ENCODE measurements at regions of chr13 and their contacts with region 1.

Region 1: GRCh38 chr13:30114571-30115256 is 192.6 kb downstream of the KATNAL1 start:
- DNase-seq: peak; percentile 98
- H3K4me3 Mint-ChIP-seq: peak overlapping the region; percentile 80
- H3K27ac Mint-ChIP-seq: peak overlapping the region; percentile 73
- H3K4me1 Mint-ChIP-seq: peaks cover 37% of the 10 kb centered on the region
- H3K27me3 Mint-ChIP-seq: peaks cover 9% of the 10 kb centered on the region

Region 2: GRCh38 chr13:29508130-29508875 is 606.4 kb before region 1 on chr13:
- intact Hi-C with region 1: loop called (anchors 2 kb)
- DNase-seq: peak; percentile 92
- H3K4me3 Mint-ChIP-seq: no peak overlapping the region
- H3K27ac Mint-ChIP-seq: no peak overlapping the region
- H3K4me1 Mint-ChIP-seq: peaks cover 1% of the 10 kb centered on the region
- H3K27me3 Mint-ChIP-seq: peaks cover 2% of the 10 kb centered on the region

Region 3: DNA sequence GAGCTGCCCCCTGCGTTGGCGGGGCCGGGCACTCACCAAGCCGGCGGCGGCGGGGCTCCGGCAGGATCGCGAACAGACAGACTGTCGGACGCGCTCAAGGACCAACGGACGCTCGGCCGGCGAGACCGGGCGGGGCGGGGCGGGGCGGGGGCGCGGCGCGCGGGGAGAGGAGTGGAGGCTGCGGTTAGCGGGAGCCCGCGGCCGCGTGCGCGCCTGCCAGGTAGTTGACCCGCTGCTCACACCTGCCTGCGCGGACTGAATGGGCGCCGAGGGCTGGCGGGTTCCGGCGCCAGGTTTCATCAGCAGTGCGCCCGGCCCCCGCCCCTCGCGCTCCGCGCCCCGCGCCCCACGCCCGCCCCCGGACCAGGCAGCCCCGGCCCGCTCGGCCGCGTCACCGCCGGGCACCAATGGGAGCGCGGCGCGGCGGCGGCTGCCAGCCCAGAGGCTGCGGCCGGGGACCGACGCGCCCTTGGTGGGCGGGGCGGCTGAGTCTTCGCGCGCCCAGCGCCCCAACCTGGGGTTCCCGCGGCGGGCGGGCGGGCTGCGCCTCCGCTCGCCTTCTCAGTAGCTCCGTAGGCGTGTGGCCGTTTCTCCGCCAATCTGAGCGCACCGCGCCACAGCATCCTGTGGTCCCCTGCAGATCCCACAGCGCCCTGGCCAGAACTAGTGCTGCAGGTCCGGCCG is 519.2 kb before region 1 on chr13 and contains the start of gene SLC7A1:
- intact Hi-C with region 1: loop called (anchors 2 kb)
- DNase-seq: peak; percentile 97
- H3K4me3 Mint-ChIP-seq: peak within 1 kb of the TSS; percentile 95
- H3K27ac Mint-ChIP-seq: peak within 1 kb of the TSS; percentile 97
- H3K4me1 Mint-ChIP-seq: peaks cover 38% of the 10 kb centered on the region
- H3K27me3 Mint-ChIP-seq: peaks cover 5% of the 10 kb centered on the region
- total RNA-seq, gene SLC7A1: 137 and 138 TPM in 2 replicates

Region 4: DNA sequence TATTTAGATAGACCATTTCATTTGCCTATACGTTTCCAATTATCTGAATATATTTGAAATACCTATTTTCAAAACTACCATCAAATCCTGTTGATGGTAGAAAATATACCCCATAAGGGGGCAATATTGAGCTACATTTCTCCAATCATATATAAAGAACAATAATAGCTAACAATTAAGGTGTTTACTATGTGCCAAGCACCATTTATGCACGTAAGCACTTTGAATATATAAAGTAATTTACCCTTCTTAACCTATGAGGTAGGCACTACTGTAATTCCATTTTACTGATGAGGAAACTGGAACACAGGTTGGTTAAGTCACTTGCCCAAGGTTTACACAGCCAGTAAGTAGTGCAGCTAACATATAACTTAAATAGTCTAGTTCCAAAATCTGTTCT is 343.5 kb before region 1 on chr13:
- intact Hi-C with region 1: loop called (anchors 1 kb)
- DNase-seq: no peak
- H3K4me3 Mint-ChIP-seq: no peak overlapping the region
- H3K27ac Mint-ChIP-seq: no peak overlapping the region
- H3K4me1 Mint-ChIP-seq: peaks cover 2% of the 10 kb centered on the region
- H3K27me3 Mint-ChIP-seq: no peaks in the 10 kb centered on the region

Region 5: GRCh38 chr13:30158774-30159445 is 44.2 kb after region 1 on chr13:
- intact Hi-C with region 1: loop called (anchors 5 kb)
- DNase-seq: peak; percentile 75
- H3K4me3 Mint-ChIP-seq: peak overlapping the region; percentile 77
- H3K27ac Mint-ChIP-seq: peak overlapping the region; percentile 91
- H3K4me1 Mint-ChIP-seq: peaks cover 42% of the 10 kb centered on the region
- H3K27me3 Mint-ChIP-seq: peaks cover 2% of the 10 kb centered on the region

Region 6: GRCh38 chr13:30191491-30192100 is 76.9 kb after region 1 on chr13:
- intact Hi-C with region 1: no loop called
- DNase-seq: no peak
- H3K4me3 Mint-ChIP-seq: no peak overlapping the region
- H3K27ac Mint-ChIP-seq: no peak overlapping the region
- H3K4me1 Mint-ChIP-seq: no peaks in the 10 kb centered on the region
- H3K27me3 Mint-ChIP-seq: no peaks in the 10 kb centered on the region